CD14-positive monocyte (primary cell): ENCODE measurements at regions of chr3 and their contacts with region 1.

Region 1: GRCh38 chr3:41117398-41117870 is 81.9 kb upstream of the CTNNB1 start:
- DNase-seq: peak; percentile 100
- H3K4me3 ChIP-seq: no peak overlapping the region
- H3K4me3 Mint-ChIP-seq: peak overlapping the region; percentile 22 to 69
- H3K27ac ChIP-seq: peak overlapping the region; percentile 78 to 90
- H3K27ac Mint-ChIP-seq: peak overlapping the region; percentile 95 to 98 (median 97)
- H3K4me1 ChIP-seq: peaks cover 26 to 35% of the 10 kb centered on the region in 2 donors
- H3K4me1 Mint-ChIP-seq: peaks cover 40% of the 10 kb centered on the region
- H3K27me3 ChIP-seq: no peaks in the 10 kb centered on the region
- H3K27me3 Mint-ChIP-seq: peaks cover 0 to 9% (median 0%) of the 10 kb centered on the region in 3 donors
- CTCF ChIP-seq: no peak

Region 2: GRCh38 chr3:40793730-40794129 is 323.7 kb before region 1 on chr3:
- intact Hi-C with region 1: loop called in 1 of 2 experiments (anchors 10 kb)
- DNase-seq: peak in 1 of 3 donors; percentile 9
- H3K4me3 ChIP-seq: no peak overlapping the region
- H3K4me3 Mint-ChIP-seq: no peak overlapping the region
- H3K27ac ChIP-seq: no peak overlapping the region
- H3K27ac Mint-ChIP-seq: no peak overlapping the region
- H3K4me1 ChIP-seq: peaks cover 6 to 10% of the 10 kb centered on the region in 2 donors
- H3K4me1 Mint-ChIP-seq: peaks cover 10% of the 10 kb centered on the region
- H3K27me3 ChIP-seq: no peaks in the 10 kb centered on the region
- H3K27me3 Mint-ChIP-seq: peaks cover 2 to 3% (median 3%) of the 10 kb centered on the region in 3 donors
- CTCF ChIP-seq: no peak

Region 3: DNA sequence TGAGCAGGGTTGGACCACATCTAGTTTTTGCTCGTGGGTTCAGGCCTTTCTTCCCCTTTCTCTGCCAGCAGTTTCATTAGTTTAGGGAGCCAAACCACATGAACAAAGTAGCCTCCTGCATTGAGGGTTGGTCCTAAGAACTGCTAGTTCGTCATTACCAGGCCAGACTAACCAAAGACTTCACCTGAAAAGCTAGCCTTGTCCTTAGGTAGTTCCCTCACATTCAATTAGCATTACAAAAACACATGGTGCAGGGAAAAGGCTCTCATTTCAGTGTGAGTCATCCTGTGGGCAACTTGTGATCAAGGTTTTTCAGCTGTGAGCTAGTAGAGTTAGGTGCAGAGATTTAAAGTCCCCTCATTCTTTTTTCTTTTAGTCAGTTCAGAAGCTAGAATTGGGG is 197.4 kb before region 1 on chr3:
- intact Hi-C with region 1: loop called in 1 of 2 experiments (anchors 5 kb)
- DNase-seq: peak; percentile 11 to 34 (median 20)
- H3K4me3 ChIP-seq: no peak overlapping the region
- H3K4me3 Mint-ChIP-seq: no peak overlapping the region
- H3K27ac ChIP-seq: no peak overlapping the region
- H3K27ac Mint-ChIP-seq: peak overlapping the region in 1 of 7 donors; percentile 13
- H3K4me1 ChIP-seq: no peaks in the 10 kb centered on the region
- H3K4me1 Mint-ChIP-seq: peaks cover 8% of the 10 kb centered on the region
- H3K27me3 ChIP-seq: no peaks in the 10 kb centered on the region
- H3K27me3 Mint-ChIP-seq: no peaks in the 10 kb centered on the region
- CTCF ChIP-seq: no peak

Region 4: GRCh38 chr3:40971191-40972168 is 146.0 kb before region 1 on chr3:
- intact Hi-C with region 1: loop called (anchors 2 kb)
- DNase-seq: peak; percentile 96 to 99 (median 99)
- H3K4me3 ChIP-seq: no peak overlapping the region
- H3K4me3 Mint-ChIP-seq: peak overlapping the region; percentile 63 to 81
- H3K27ac ChIP-seq: peak overlapping the region; percentile 87 to 94
- H3K27ac Mint-ChIP-seq: peak overlapping the region; percentile 96 to 100 (median 99)
- H3K4me1 ChIP-seq: peaks cover 18 to 27% of the 10 kb centered on the region in 2 donors
- H3K4me1 Mint-ChIP-seq: peaks cover 35% of the 10 kb centered on the region
- H3K27me3 ChIP-seq: no peaks in the 10 kb centered on the region
- H3K27me3 Mint-ChIP-seq: peaks cover 0 to 8% (median 3%) of the 10 kb centered on the region in 3 donors
- CTCF ChIP-seq: no peak

Region 5: GRCh38 chr3:41053220-41053619 is 64.2 kb before region 1 on chr3:
- intact Hi-C with region 1: no loop called
- DNase-seq: no peak
- H3K4me3 ChIP-seq: no peak overlapping the region
- H3K4me3 Mint-ChIP-seq: no peak overlapping the region
- H3K27ac ChIP-seq: no peak overlapping the region
- H3K27ac Mint-ChIP-seq: peak overlapping the region in 2 of 7 donors; percentile 32 to 66
- H3K4me1 ChIP-seq: no peaks in the 10 kb centered on the region
- H3K4me1 Mint-ChIP-seq: peaks cover 2% of the 10 kb centered on the region
- H3K27me3 ChIP-seq: no peaks in the 10 kb centered on the region
- H3K27me3 Mint-ChIP-seq: peaks cover 2 to 4% (median 4%) of the 10 kb centered on the region in 3 donors
- CTCF ChIP-seq: no peak